ENCODE measurements at regions of chr2 and their contacts with region 1.

Region 1: DNA sequence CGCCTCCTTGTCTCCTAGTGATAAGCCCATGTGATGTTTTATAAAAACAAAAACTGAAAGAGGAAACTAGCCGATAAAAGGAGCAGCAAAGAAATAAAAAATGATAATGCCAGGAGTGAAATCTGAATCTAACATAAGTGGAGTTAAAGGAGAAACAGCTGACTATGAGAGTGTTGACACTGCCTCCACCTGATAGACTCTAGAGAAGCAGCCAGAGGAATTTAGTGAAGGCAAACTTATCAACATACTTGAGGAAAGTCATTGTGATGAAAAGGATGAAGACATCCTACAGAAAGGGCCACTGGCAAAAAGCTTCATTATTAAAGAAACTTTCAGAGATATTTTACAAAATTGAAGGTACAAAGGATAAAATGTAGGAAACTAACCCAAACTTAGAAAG is 1.9 kb downstream of the M1AP start:
- DNase-seq: no peak
- H3K4me3 Mint-ChIP-seq: no peak overlapping the region
- H3K27ac Mint-ChIP-seq: no peak overlapping the region
- H3K4me1 Mint-ChIP-seq: peaks cover 3% of the 10 kb centered on the region
- H3K27me3 Mint-ChIP-seq: peaks cover 35% of the 10 kb centered on the region

Region 2: DNA sequence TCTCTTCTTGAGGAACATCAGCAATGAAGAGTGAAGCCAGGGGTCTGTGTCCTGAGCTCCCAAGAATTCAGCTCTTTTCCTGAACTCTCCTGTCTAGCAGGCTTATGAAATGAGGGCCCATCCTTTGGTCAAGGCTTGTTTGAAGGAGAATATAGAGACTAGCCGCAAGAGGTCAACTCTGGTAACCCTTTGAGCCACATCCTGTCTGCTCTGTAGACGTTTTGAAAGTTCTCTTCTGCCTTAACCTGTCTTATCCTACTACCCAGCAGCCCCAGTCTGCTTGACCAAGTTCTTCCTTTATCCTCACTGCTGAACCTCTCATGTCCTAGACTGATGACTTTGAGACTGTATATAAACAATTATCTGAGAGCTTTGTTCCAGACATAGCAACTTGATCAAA is 13.3 kb after region 1 on chr2:
- intact Hi-C with region 1: loop called (anchors 2 kb)
- DNase-seq: no peak
- H3K4me3 Mint-ChIP-seq: no peak overlapping the region
- H3K27ac Mint-ChIP-seq: no peak overlapping the region
- H3K4me1 Mint-ChIP-seq: peaks cover 11% of the 10 kb centered on the region
- H3K27me3 Mint-ChIP-seq: peaks cover 10% of the 10 kb centered on the region

Region 3: GRCh38 chr2:74876081-74876886 is 230.1 kb after region 1 on chr2:
- intact Hi-C with region 1: no loop called
- DNase-seq: peak; percentile 30
- H3K4me3 Mint-ChIP-seq: no peak overlapping the region
- H3K27ac Mint-ChIP-seq: peak overlapping the region; percentile 47
- H3K4me1 Mint-ChIP-seq: peaks cover 3% of the 10 kb centered on the region
- H3K27me3 Mint-ChIP-seq: no peaks in the 10 kb centered on the region

Region 4: DNA sequence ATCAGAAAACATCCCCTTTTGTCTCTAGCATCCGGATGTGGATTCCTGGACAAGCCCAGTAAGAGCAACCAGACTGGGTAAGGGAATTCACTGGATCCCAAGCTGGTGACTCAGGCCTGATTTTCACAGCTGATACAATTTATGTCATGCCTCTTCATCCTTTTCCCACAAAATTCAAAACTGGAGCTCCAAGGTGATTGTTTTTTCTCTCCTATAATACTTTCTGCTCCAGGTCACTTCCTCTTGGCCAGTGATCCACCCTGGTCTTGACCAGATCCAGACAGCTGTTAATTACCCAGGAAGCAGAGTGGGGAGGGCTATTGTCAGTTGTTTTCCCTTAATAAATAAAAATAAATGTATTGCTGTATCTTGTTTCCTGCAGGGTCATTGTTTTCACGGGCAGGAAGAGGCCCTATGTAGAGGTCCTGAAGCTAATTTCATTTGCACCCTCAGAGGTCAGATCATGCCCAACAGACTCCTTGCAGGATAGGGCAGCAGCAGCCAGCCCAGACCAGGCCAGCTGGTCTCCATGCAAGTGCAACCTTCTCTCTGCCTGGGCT is 856.9 kb after region 1 on chr2:
- intact Hi-C with region 1: no loop called
- DNase-seq: no peak
- H3K4me3 Mint-ChIP-seq: no peak overlapping the region
- H3K27ac Mint-ChIP-seq: no peak overlapping the region
- H3K4me1 Mint-ChIP-seq: no peaks in the 10 kb centered on the region
- H3K27me3 Mint-ChIP-seq: no peaks in the 10 kb centered on the region

Measured in activated T-helper 2 cell treated with anti-CD3 and anti-CD28 coated beads, Interferon-gamma antibody, Interleukin-2, Interleukin-4, amounts not matched to agents 10 μg/mL and 5 μg/mL and 100 μg/mL, durations not matched to agents 14 hours and 24 hours and 36 hours (primary cell).